CD4-positive, alpha-beta memory T cell (primary cell): ENCODE measurements at regions of chr1 and their contacts with region 1.

Region 1: DNA sequence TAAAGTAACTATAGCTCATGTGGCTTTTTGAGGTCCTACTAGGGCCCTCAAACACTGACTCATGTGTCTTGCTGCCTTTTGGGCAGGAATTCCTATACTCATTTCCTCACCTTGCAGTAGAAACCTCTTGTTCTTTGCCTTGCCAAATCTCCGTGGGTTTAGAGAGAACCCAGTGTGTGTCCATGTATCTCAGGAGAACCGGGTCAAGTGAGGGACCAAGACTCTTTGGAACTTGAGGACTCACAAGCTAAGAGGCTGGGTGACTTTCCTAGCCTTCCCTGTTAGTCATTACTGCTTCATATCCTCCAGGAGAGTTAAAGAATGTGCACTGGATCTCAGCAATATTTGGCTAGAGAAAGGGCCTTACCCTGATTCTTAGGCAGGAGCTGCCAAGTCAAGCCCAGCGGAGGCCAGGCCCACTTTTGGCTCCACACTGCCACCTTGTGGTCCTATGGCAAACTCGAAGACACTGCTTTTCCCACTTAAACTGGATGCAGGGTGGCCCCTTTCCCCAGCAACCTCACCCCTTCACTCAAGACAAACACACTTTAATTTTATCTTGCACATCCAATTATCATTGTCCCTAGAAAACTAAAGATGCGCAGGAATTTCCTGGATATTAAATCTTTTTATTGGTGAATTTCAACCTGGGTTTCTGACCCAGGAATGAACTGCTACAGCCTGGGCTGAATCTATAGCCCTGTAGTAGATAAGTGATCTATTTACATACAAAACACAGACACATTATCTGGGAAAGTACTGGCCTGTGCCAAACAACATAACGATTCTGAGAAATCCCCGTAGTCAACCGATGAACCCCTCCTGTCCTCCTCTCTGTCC is 10.6 kb downstream of the AVPR1B start:
- DNase-seq: peak; percentile 65 to 72 (median 68)
- H3K4me3 ChIP-seq: no peak overlapping the region
- H3K4me3 Mint-ChIP-seq: no peak overlapping the region
- H3K27ac ChIP-seq: no peak overlapping the region
- H3K27ac Mint-ChIP-seq: peak overlapping the region in 2 of 7 donors; percentile 16 to 58
- H3K4me1 ChIP-seq: no peaks in the 10 kb centered on the region
- H3K4me1 Mint-ChIP-seq: peaks cover 3 to 9% (median 4%) of the 10 kb centered on the region in 4 donors
- H3K27me3 ChIP-seq: no peaks in the 10 kb centered on the region
- H3K27me3 Mint-ChIP-seq: peaks cover 2 to 6% of the 10 kb centered on the region in 2 donors

Region 2: DNA sequence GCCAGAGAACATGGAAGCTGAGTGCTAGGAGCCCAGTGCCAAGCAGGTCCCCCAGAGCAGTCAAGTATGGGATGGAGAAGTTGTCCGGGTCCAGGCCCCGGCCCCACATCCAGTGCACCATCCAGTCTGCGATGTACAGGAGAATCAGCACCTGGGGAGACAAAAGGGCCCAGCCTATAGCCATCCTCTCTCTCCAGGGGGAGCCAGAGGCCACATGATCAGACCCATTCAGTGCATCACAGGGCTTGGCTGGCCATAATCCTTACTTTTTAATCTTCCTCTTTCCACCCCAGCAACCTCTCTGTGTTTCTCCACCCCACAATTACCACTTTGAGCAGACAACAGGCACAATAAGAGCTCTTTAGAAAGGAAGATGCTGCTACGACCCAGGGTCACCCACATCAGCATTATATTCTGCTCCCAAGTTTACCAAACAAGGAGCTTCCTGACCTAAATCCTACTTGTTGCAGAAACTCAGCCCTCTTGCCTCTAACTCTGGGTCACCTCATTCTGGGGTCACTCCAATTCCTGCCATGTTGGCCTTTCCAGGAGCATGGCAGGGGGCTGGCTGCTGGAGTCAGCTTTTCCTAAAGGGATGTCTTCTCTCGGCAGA is 314.9 kb before region 1 on chr1:
- CTCF ChIA-PET with region 1: interaction called, 17 read pairs
- POLR2A ChIA-PET with region 1: no interaction called
- intact Hi-C with region 1: no loop called
- DNase-seq: peak; percentile 51 to 64 (median 56)
- H3K4me3 ChIP-seq: no peak overlapping the region
- H3K4me3 Mint-ChIP-seq: no peak overlapping the region
- H3K27ac ChIP-seq: no peak overlapping the region
- H3K27ac Mint-ChIP-seq: peak overlapping the region in 2 of 7 donors; percentile 74 to 81
- H3K4me1 ChIP-seq: no peaks in the 10 kb centered on the region
- H3K4me1 Mint-ChIP-seq: no peaks in the 10 kb centered on the region
- H3K27me3 ChIP-seq: no peaks in the 10 kb centered on the region
- H3K27me3 Mint-ChIP-seq: no peaks in the 10 kb centered on the region

Region 3: DNA sequence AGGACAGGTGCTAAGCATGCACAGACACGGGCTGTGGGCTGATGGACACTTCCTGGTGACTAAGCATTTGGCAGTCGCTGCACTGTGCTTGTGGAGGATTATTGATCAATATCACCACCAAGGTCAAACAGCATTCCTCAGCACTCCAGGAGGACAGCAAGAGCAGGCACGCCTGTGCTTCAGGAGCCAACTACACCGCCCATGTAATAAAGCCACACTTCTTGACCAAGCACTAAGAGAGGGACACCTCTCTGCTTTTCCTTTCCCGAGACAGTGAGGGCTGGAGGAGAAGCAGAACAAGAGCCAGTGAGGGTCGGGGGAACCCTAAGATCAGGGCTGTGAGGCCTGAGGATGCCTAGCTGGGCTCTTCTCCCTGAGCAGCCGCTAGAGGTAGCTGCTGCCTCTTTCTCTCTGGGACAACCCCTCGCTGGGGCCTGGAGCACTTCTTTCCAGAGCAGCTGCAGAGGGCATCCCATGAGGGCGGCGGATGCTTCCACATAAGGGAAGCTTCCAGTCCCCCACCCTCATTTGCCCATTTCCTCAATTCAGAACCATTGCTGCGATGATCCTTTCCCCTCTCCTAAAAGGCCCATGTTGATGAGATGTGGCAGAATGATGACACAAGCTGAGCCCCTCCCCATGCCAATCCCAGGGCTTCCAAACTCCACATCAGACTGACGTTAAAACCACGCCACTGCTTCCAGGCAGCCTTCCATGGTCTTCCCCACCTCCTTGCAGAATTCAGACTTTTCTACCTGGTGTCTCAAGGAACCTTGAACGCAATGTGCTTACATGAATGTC is 122.4 kb before region 1 on chr1:
- CTCF ChIA-PET with region 1: interaction called, 12 read pairs
- POLR2A ChIA-PET with region 1: no interaction called
- intact Hi-C with region 1: loop called (anchors 2 kb)
- DNase-seq: no peak
- H3K4me3 ChIP-seq: no peak overlapping the region
- H3K4me3 Mint-ChIP-seq: no peak overlapping the region
- H3K27ac ChIP-seq: no peak overlapping the region
- H3K27ac Mint-ChIP-seq: peak overlapping the region in 1 of 7 donors; percentile 6
- H3K4me1 ChIP-seq: no peaks in the 10 kb centered on the region
- H3K4me1 Mint-ChIP-seq: no peaks in the 10 kb centered on the region
- H3K27me3 ChIP-seq: no peaks in the 10 kb centered on the region
- H3K27me3 Mint-ChIP-seq: no peaks in the 10 kb centered on the region

Region 4: GRCh38 chr1:206036663-206037455 is 69.7 kb before region 1 on chr1:
- CTCF ChIA-PET with region 1: interaction called, 182 read pairs
- POLR2A ChIA-PET with region 1: no interaction called
- intact Hi-C with region 1: no loop called
- DNase-seq: no peak
- H3K4me3 ChIP-seq: no peak overlapping the region
- H3K4me3 Mint-ChIP-seq: peak overlapping the region in 1 of 8 donors; percentile 15
- H3K27ac ChIP-seq: no peak overlapping the region
- H3K27ac Mint-ChIP-seq: no peak overlapping the region
- H3K4me1 ChIP-seq: peaks cover 18% of the 10 kb centered on the region
- H3K4me1 Mint-ChIP-seq: peaks cover 8 to 32% (median 17%) of the 10 kb centered on the region in 4 donors
- H3K27me3 ChIP-seq: no peaks in the 10 kb centered on the region
- H3K27me3 Mint-ChIP-seq: peaks cover 0 to 3% of the 10 kb centered on the region in 2 donors

Region 5: DNA sequence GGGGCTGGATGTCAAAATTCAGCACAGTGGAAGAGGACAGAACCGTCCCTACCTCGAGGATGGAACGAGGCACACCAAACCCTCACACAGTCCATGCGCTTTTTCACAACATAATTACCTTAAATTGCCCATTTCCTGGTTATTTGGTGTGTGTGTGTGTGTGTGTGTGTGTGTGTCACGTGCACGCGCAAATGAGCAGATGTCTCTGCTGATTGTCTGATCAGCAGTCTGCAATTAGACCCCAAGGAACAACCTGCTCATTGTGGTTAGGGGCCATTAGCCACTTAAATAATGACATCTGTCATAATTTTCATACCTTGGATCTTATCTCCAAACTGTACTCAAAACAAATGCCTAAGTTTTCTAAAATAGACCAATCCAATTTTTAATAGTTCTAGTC is 12.5 kb before region 1 on chr1:
- CTCF ChIA-PET with region 1: interaction called, 15 read pairs
- POLR2A ChIA-PET with region 1: no interaction called
- intact Hi-C with region 1: no loop called
- DNase-seq: no peak
- H3K4me3 ChIP-seq: no peak overlapping the region
- H3K4me3 Mint-ChIP-seq: no peak overlapping the region
- H3K27ac ChIP-seq: no peak overlapping the region
- H3K27ac Mint-ChIP-seq: no peak overlapping the region
- H3K4me1 ChIP-seq: no peaks in the 10 kb centered on the region
- H3K4me1 Mint-ChIP-seq: no peaks in the 10 kb centered on the region
- H3K27me3 ChIP-seq: no peaks in the 10 kb centered on the region
- H3K27me3 Mint-ChIP-seq: peaks cover 7 to 23% of the 10 kb centered on the region in 2 donors

Region 6: GRCh38 chr1:206143537-206144172 is 37.1 kb after region 1 on chr1:
- CTCF ChIA-PET with region 1: no interaction called
- POLR2A ChIA-PET with region 1: no interaction called
- intact Hi-C with region 1: no loop called
- DNase-seq: no peak
- H3K4me3 ChIP-seq: no peak overlapping the region
- H3K4me3 Mint-ChIP-seq: no peak overlapping the region
- H3K27ac ChIP-seq: no peak overlapping the region
- H3K27ac Mint-ChIP-seq: no peak overlapping the region
- H3K4me1 ChIP-seq: no peaks in the 10 kb centered on the region
- H3K4me1 Mint-ChIP-seq: no peaks in the 10 kb centered on the region
- H3K27me3 ChIP-seq: peaks cover 4% of the 10 kb centered on the region
- H3K27me3 Mint-ChIP-seq: peaks cover 17 to 33% of the 10 kb centered on the region in 2 donors